K562 (cell line): ENCODE measurements at regions of chr12 and their contacts with region 1.

Region 1: GRCh38 chr12:104381731-104382480 is 74.8 kb upstream of the CHST11 start:
- DNase-seq: peak; percentile 79 to 89 (median 81)
- ATAC-seq: peak; percentile 97
- H3K4me3 ChIP-seq: no peak overlapping the region
- H3K27ac ChIP-seq: no peak overlapping the region
- H3K4me1 ChIP-seq: peaks cover 0 to 3% of the 10 kb centered on the region in 2 experiments; a peak in 3 of 5 replicates
- H3K27me3 ChIP-seq: no peaks in the 10 kb centered on the region
- CTCF ChIP-seq: peak; percentile 90 to 95 (median 95)
- EP300 ChIP-seq: no peak
- POLR2A ChIP-seq: no peak
- RAD21 ChIP-seq: peak; percentile 98

Region 2: GRCh38 chr12:104596134-104596799 is 214.4 kb after region 1 on chr12:
- CTCF ChIA-PET with region 1: no interaction called
- POLR2A ChIA-PET with region 1: no interaction called
- in situ Hi-C with region 1: no loop called
- intact Hi-C with region 1: loop called (anchors 5 kb)
- DNase-seq: no peak
- ATAC-seq: no peak
- H3K4me3 ChIP-seq: no peak overlapping the region
- H3K27ac ChIP-seq: no peak overlapping the region
- H3K4me1 ChIP-seq: peaks cover 22 to 69% of the 10 kb centered on the region in 2 experiments
- H3K27me3 ChIP-seq: no peaks in the 10 kb centered on the region
- CTCF ChIP-seq: no peak
- EP300 ChIP-seq: no peak
- POLR2A ChIP-seq: no peak
- RAD21 ChIP-seq: no peak

Region 3: GRCh38 chr12:104608998-104609397 is 227.1 kb after region 1 on chr12:
- CTCF ChIA-PET with region 1: no interaction called
- POLR2A ChIA-PET with region 1: no interaction called
- in situ Hi-C with region 1: no loop called
- intact Hi-C with region 1: no loop called
- DNase-seq: no peak
- ATAC-seq: no peak
- H3K4me3 ChIP-seq: no peak overlapping the region
- H3K27ac ChIP-seq: no peak overlapping the region
- H3K4me1 ChIP-seq: peaks cover 30 to 32% of the 10 kb centered on the region in 2 experiments
- H3K27me3 ChIP-seq: no peaks in the 10 kb centered on the region
- CTCF ChIP-seq: no peak
- EP300 ChIP-seq: no peak
- POLR2A ChIP-seq: no peak
- RAD21 ChIP-seq: no peak

Region 4: DNA sequence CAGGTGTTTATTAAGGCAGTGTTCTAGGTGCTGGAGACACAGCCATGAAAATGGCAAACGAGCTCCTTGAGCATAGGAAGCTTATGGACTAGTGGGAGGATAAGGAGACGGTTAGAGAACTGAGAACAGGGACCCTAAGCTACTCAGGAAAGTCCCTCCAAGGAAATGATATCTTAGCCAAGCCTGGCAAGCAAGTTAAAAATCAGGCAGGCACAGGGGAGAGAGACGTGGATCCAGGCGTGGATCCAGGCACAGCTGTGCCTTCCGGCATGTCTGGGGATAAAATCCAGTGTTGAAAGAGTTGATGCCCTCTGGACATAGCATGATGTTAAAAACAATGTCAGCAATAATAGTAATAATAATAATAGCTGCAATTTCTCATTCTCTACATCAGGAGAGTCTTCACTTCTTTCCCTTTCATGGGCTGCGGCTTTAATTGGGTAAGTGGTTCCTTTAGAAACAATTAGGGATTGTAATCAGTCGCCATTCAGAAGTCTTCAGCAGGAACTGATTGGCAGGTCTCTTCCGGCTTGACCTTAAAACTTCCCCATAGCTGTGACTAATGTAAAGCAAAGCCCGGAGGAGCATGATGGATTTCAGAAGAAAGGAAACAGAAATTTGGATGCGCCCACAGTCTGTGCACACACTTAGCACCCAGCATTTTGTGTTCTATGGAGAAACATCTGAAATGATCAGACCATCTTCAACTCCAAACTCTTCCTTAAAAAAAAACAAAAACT is 346.0 kb after region 1 on chr12:
- CTCF ChIA-PET with region 1: no interaction called
- POLR2A ChIA-PET with region 1: no interaction called
- in situ Hi-C with region 1: no loop called
- intact Hi-C with region 1: loop called (anchors 5 kb)
- DNase-seq: peak in 1 of 4 experiments; percentile 41
- ATAC-seq: peak; percentile 33
- H3K4me3 ChIP-seq: no peak overlapping the region
- H3K27ac ChIP-seq: no peak overlapping the region
- H3K4me1 ChIP-seq: peaks cover 15 to 49% of the 10 kb centered on the region in 2 experiments
- H3K27me3 ChIP-seq: no peaks in the 10 kb centered on the region
- CTCF ChIP-seq: no peak
- EP300 ChIP-seq: no peak
- POLR2A ChIP-seq: no peak
- RAD21 ChIP-seq: no peak

Region 5: DNA sequence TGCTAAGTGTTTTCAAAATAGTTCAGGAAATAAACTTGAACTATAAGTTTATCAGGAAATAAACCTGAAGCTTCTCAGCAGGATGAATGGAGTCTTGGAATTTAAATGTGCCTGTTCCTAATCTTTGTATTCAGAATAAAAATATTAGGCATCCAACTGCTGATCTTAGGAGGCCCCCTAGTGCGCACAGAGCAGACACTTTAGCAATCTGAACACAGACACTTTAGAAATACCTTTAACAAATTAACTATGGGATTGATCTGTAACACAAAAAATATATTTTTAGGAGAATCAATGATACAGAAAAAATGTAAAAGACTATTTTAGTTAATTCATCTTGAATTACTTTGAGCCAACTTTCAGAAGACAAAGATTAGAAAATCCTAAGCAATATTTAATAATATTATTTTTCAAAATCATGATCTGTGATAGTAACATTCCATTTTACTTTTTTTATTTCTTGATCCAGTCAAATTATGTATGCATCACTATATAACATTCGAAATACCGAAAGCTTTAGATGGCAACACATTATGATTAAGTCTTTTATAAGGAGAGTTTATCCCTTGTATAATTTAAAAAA is 495.3 kb after region 1 on chr12:
- CTCF ChIA-PET with region 1: interaction called, 11 read pairs
- POLR2A ChIA-PET with region 1: no interaction called
- in situ Hi-C with region 1: no loop called
- intact Hi-C with region 1: loop called (anchors 1 kb)
- DNase-seq: peak in 2 of 4 experiments; percentile 28 to 37
- ATAC-seq: peak; percentile 47; the same call in 1 of the 3 replicates
- H3K4me3 ChIP-seq: no peak overlapping the region
- H3K27ac ChIP-seq: no peak overlapping the region
- H3K4me1 ChIP-seq: peaks cover 0 to 5% of the 10 kb centered on the region in 2 experiments; a peak in 1 of 5 replicates
- H3K27me3 ChIP-seq: no peaks in the 10 kb centered on the region
- CTCF ChIP-seq: peak; percentile 47 to 70 (median 50); a peak in 4 of 6 replicates
- EP300 ChIP-seq: no peak
- POLR2A ChIP-seq: no peak
- RAD21 ChIP-seq: peak; percentile 86 to 88

Region 6: DNA sequence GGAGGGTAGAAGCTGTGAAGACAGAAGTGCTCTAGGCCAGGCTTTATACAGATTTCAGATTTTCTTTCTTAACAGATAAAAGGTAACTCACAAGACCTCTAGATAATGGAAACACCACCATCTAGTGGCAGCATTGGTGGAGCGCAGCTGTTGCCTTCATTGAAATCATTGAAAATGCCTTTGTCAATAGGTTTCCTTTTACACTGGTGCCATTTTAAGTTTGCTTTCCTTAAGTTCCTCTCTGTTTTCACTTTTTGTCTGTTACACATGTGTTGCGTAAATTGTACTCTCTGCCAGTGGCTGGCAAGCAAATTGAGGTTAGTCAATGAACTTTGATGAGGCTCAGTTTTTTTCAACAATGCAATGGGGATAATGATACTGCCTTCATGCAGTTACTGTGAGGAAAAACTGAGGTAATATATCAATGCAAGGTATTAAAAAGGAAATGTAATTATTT is 671.2 kb after region 1 on chr12:
- CTCF ChIA-PET with region 1: interaction called, 8 read pairs
- POLR2A ChIA-PET with region 1: no interaction called
- in situ Hi-C with region 1: loop called (anchors 5 kb)
- intact Hi-C with region 1: loop called (anchors 5 kb)
- DNase-seq: peak; percentile 46 to 74 (median 48)
- ATAC-seq: peak; percentile 85
- H3K4me3 ChIP-seq: no peak overlapping the region
- H3K27ac ChIP-seq: no peak overlapping the region
- H3K4me1 ChIP-seq: no peaks in the 10 kb centered on the region
- H3K27me3 ChIP-seq: no peaks in the 10 kb centered on the region
- CTCF ChIP-seq: peak; percentile 62 to 90 (median 85)
- EP300 ChIP-seq: no peak
- POLR2A ChIP-seq: no peak
- RAD21 ChIP-seq: peak; percentile 75 to 85